ENCODE measurements at regions of chr16 and their contacts with region 1.

Region 1: GRCh38 chr16:15643048-15643945 is at the start of gene MARF1:
- DNase-seq: peak; percentile 96
- ATAC-seq: peak; percentile 60
- H3K4me3 ChIP-seq: peak within 1 kb of the TSS; percentile 77 to 99 (median 96)
- H3K27ac ChIP-seq: peak within 1 kb of the TSS; percentile 99
- H3K4me1 ChIP-seq: peaks cover 51% of the 10 kb centered on the region
- H3K27me3 ChIP-seq: no peaks in the 10 kb centered on the region; a peak in 1 of 5 replicates
- CTCF ChIP-seq: peak; percentile 60
- EP300 ChIP-seq: peak in 1 of 2 experiments; percentile 12; a peak in 2 of 4 replicates
- POLR2A ChIP-seq: peak; percentile 62 to 94
- RAD21 ChIP-seq: no peak
- total RNA-seq, gene MARF1: 8.7 and 12.6 TPM in 2 replicates

Region 2: GRCh38 chr16:15553313-15554088 is 89.8 kb before region 1 on chr16:
- CTCF ChIA-PET with region 1: no interaction called
- POLR2A ChIA-PET with region 1: interaction called, 14 read pairs
- in situ Hi-C with region 1: no loop called
- intact Hi-C with region 1: loop called (anchors 1 kb)
- DNase-seq: no peak
- ATAC-seq: no peak
- H3K4me3 ChIP-seq: no peak overlapping the region
- H3K27ac ChIP-seq: no peak overlapping the region
- H3K4me1 ChIP-seq: peaks cover 18% of the 10 kb centered on the region
- H3K27me3 ChIP-seq: no peaks in the 10 kb centered on the region
- CTCF ChIP-seq: no peak
- EP300 ChIP-seq: no peak
- POLR2A ChIP-seq: no peak
- RAD21 ChIP-seq: no peak

Region 3: GRCh38 chr16:15592324-15592723 is 51.0 kb before region 1 on chr16:
- CTCF ChIA-PET with region 1: interaction called, 3 read pairs
- POLR2A ChIA-PET with region 1: interaction called, 51 read pairs
- in situ Hi-C with region 1: no loop called
- intact Hi-C with region 1: loop called (anchors 5 kb)
- DNase-seq: no peak
- ATAC-seq: no peak
- H3K4me3 ChIP-seq: no peak overlapping the region
- H3K27ac ChIP-seq: no peak overlapping the region
- H3K4me1 ChIP-seq: peaks cover 46% of the 10 kb centered on the region
- H3K27me3 ChIP-seq: no peaks in the 10 kb centered on the region
- CTCF ChIP-seq: no peak
- EP300 ChIP-seq: no peak
- POLR2A ChIP-seq: no peak
- RAD21 ChIP-seq: no peak

Region 4: DNA sequence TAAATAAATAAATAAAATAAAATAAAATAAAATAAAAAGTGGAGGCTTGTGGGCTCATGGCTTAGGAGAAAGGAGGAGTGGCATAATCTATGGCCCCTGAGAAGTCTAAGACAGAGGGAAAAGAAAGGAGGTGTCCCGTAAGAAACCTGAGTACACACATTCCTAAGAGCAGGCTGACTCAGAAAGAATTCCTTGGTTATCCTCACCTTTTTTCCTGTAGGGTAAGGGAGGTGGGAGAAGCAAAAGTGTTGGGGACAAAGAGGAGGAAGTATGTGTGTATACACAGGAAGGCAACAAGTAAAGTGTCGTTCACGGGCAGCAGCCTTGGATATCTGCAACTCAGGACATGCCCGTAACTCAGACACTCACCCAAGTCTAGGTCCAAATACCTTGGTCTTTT is 29.6 kb before region 1 on chr16:
- CTCF ChIA-PET with region 1: interaction called, 3 read pairs
- POLR2A ChIA-PET with region 1: interaction called, 89 read pairs
- in situ Hi-C with region 1: no loop called
- intact Hi-C with region 1: loop called (anchors 2 kb)
- DNase-seq: no peak
- ATAC-seq: no peak
- H3K4me3 ChIP-seq: no peak overlapping the region
- H3K27ac ChIP-seq: no peak overlapping the region
- H3K4me1 ChIP-seq: peaks cover 72% of the 10 kb centered on the region
- H3K27me3 ChIP-seq: no peaks in the 10 kb centered on the region
- CTCF ChIP-seq: no peak
- EP300 ChIP-seq: no peak
- POLR2A ChIP-seq: no peak
- RAD21 ChIP-seq: no peak

Region 5: GRCh38 chr16:15658149-15658548 is 14.9 kb after region 1 on chr16:
- CTCF ChIA-PET with region 1: no interaction called
- POLR2A ChIA-PET with region 1: interaction called, 36 read pairs
- in situ Hi-C with region 1: no loop called
- intact Hi-C with region 1: no loop called
- DNase-seq: no peak
- ATAC-seq: peak; percentile 23; the same call in 1 of the 3 replicates
- H3K4me3 ChIP-seq: no peak overlapping the region
- H3K27ac ChIP-seq: no peak overlapping the region
- H3K4me1 ChIP-seq: peaks cover 41% of the 10 kb centered on the region
- H3K27me3 ChIP-seq: no peaks in the 10 kb centered on the region
- CTCF ChIP-seq: no peak
- EP300 ChIP-seq: no peak
- POLR2A ChIP-seq: no peak
- RAD21 ChIP-seq: no peak

Region 6: GRCh38 chr16:15672514-15673167 is 29.3 kb after region 1 on chr16:
- CTCF ChIA-PET with region 1: no interaction called
- POLR2A ChIA-PET with region 1: interaction called, 53 read pairs
- in situ Hi-C with region 1: no loop called
- intact Hi-C with region 1: loop called (anchors 1 kb)
- DNase-seq: peak; percentile 100
- ATAC-seq: peak; percentile 97
- H3K4me3 ChIP-seq: peak overlapping the region in 2 of 3 experiments; percentile 7 to 37; a peak in 4 of 6 replicates
- H3K27ac ChIP-seq: peak overlapping the region; percentile 78
- H3K4me1 ChIP-seq: peaks cover 53% of the 10 kb centered on the region
- H3K27me3 ChIP-seq: no peaks in the 10 kb centered on the region
- CTCF ChIP-seq: peak; percentile 44; the same call in 1 of the 2 replicates
- EP300 ChIP-seq: peak; percentile 95 to 97
- POLR2A ChIP-seq: peak; percentile 65 to 74
- RAD21 ChIP-seq: no peak; the same call in 1 of the 2 replicates

Region 7: GRCh38 chr16:15704545-15704987 is 61.3 kb after region 1 on chr16:
- CTCF ChIA-PET with region 1: no interaction called
- POLR2A ChIA-PET with region 1: interaction called, 6 read pairs
- in situ Hi-C with region 1: no loop called
- intact Hi-C with region 1: loop called (anchors 5 kb)
- DNase-seq: peak; percentile 75
- ATAC-seq: peak; percentile 88
- H3K4me3 ChIP-seq: no peak overlapping the region
- H3K27ac ChIP-seq: no peak overlapping the region
- H3K4me1 ChIP-seq: no peaks in the 10 kb centered on the region
- H3K27me3 ChIP-seq: no peaks in the 10 kb centered on the region; a peak in 1 of 5 replicates
- CTCF ChIP-seq: peak; percentile 97
- EP300 ChIP-seq: no peak
- POLR2A ChIP-seq: no peak
- RAD21 ChIP-seq: peak; percentile 87

Region 8: DNA sequence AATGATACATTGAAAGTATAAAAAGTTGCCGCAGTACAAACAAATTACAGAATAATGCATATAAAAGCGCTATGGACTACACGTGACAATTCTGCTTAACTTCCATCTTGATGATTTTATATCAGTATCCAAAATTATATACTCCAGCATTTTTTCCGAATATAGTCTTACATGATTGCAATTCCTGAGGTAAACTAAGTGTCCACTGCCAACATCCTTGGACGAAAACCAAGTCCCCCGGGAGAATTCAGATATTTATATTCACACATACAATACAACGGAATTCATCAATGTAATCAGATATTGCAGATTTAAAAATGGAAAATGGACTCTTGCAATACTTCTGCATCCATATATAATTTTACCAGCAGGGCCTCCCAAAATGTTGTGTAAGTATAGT is 222.4 kb after region 1 on chr16:
- CTCF ChIA-PET with region 1: no interaction called
- POLR2A ChIA-PET with region 1: no interaction called
- in situ Hi-C with region 1: no loop called
- intact Hi-C with region 1: no loop called
- DNase-seq: no peak
- ATAC-seq: no peak
- H3K4me3 ChIP-seq: no peak overlapping the region
- H3K27ac ChIP-seq: no peak overlapping the region
- H3K4me1 ChIP-seq: no peaks in the 10 kb centered on the region
- H3K27me3 ChIP-seq: no peaks in the 10 kb centered on the region
- CTCF ChIP-seq: no peak
- EP300 ChIP-seq: no peak
- POLR2A ChIP-seq: no peak
- RAD21 ChIP-seq: no peak

Measured in HepG2 (cell line).